ENCODE measurements at regions of chr5 and their contacts with region 1.

Region 1: DNA sequence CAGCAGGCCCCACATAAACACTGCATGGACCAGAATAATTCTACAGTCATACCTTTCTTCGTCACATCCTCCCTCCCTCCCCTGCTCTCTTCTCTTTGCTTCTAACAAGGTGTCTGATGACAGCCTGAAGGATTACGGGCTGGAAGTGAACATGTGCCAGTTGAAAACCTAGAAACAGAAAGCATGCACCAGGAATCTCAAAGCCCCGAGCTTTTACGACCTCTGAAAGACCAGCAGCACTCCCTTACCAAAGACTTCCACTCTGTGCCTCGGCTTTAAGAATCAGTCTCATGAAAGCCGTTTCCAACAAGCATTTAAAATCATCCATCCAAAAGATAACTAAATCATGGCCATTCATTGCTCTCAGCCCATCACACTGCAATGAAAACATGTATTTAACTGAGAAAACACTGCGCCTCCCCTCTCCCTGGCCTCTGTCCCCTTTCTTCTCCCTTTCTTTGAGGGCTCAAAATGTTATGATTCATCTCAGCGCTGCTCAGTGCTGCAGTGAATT is 21.3 kb downstream of the MSX2 start:
- DNase-seq: no peak
- H3K4me3 ChIP-seq: no peak overlapping the region
- H3K27ac ChIP-seq: no peak overlapping the region
- H3K4me1 ChIP-seq: no peaks in the 10 kb centered on the region
- H3K27me3 ChIP-seq: peaks cover 57% of the 10 kb centered on the region
- CTCF ChIP-seq: no peak
- EP300 ChIP-seq: no peak
- POLR2A ChIP-seq: no peak

Region 2: GRCh38 chr5:174706997-174707572 is 38.6 kb before region 1 on chr5:
- in situ Hi-C with region 1: no loop called
- intact Hi-C with region 1: loop called (anchors 2 kb)
- DNase-seq: no peak
- H3K4me3 ChIP-seq: no peak overlapping the region
- H3K27ac ChIP-seq: no peak overlapping the region
- H3K4me1 ChIP-seq: no peaks in the 10 kb centered on the region
- H3K27me3 ChIP-seq: peaks cover 33% of the 10 kb centered on the region
- CTCF ChIP-seq: no peak
- EP300 ChIP-seq: no peak
- POLR2A ChIP-seq: no peak

Region 3: DNA sequence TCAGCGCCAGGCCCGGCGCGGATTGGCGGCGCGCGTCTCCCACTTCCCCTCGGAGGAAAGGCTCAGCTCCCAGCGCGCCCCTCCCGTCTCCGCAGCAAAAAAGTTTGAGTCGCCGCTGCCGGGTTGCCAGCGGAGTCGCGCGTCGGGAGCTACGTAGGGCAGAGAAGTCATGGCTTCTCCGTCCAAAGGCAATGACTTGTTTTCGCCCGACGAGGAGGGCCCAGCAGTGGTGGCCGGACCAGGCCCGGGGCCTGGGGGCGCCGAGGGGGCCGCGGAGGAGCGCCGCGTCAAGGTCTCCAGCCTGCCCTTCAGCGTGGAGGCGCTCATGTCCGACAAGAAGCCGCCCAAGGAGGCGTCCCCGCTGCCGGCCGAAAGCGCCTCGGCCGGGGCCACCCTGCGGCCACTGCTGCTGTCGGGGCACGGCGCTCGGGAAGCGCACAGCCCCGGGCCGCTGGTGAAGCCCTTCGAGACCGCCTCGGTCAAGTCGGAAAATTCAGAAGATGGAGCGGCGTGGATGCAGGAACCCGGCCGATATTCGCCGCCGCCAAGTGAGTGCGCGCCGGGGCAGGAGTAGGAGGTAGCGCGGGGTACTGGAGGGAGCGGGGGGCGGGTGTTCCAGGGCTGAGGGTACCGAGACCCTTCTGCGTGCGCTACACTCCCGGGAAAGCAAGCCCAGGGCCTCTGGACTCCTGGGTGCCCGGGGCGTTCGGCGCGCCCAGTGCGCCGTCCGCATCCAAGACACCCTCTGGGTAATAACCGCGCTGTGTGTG is 21.0 kb before region 1 on chr5 and contains the start of gene MSX2:
- in situ Hi-C with region 1: no loop called
- intact Hi-C with region 1: no loop called
- DNase-seq: peak; percentile 84
- H3K4me3 ChIP-seq: peak within 1 kb of the TSS; percentile 47 to 55 (median 52)
- H3K27ac ChIP-seq: peak within 1 kb of the TSS in 3 of 4 donors; percentile 45 to 56 (median 55)
- H3K4me1 ChIP-seq: peaks cover 0 to 27% (median 17%) of the 10 kb centered on the region in 4 donors
- H3K27me3 ChIP-seq: peaks cover 99% of the 10 kb centered on the region
- CTCF ChIP-seq: no peak
- EP300 ChIP-seq: no peak
- POLR2A ChIP-seq: peak; percentile 21
- total RNA-seq, gene MSX2: 0.27 to 1.1 TPM in 2 of 4 donors, not detected in the others

Region 4: GRCh38 chr5:174760721-174761120 is 15.1 kb after region 1 on chr5:
- in situ Hi-C with region 1: no loop called
- intact Hi-C with region 1: no loop called
- DNase-seq: no peak
- H3K4me3 ChIP-seq: no peak overlapping the region
- H3K27ac ChIP-seq: no peak overlapping the region
- H3K4me1 ChIP-seq: no peaks in the 10 kb centered on the region
- H3K27me3 ChIP-seq: no peaks in the 10 kb centered on the region
- CTCF ChIP-seq: no peak
- EP300 ChIP-seq: no peak
- POLR2A ChIP-seq: no peak

Region 5: DNA sequence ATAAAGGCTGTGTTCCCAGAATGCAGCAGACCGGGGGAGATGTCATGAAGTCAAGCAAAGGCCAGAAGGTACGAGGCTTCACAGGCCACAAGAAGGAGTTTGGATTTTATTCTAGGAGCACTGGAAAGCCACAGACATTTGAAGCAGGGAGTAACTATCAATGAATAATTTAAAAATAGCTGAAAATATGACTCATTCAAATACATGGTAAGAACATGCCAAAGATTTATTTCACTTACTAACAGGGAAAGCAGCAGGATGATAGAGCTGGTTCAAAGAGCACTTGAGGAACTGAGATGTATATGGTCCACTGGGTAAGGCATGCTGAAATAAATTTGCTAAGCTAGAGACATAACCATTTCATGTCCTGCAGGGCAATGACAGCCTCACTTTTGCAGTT is 31.9 kb after region 1 on chr5:
- in situ Hi-C with region 1: no loop called
- intact Hi-C with region 1: no loop called
- DNase-seq: no peak
- H3K4me3 ChIP-seq: no peak overlapping the region
- H3K27ac ChIP-seq: no peak overlapping the region
- H3K4me1 ChIP-seq: no peaks in the 10 kb centered on the region
- H3K27me3 ChIP-seq: no peaks in the 10 kb centered on the region
- CTCF ChIP-seq: no peak
- EP300 ChIP-seq: no peak
- POLR2A ChIP-seq: no peak

Region 6: GRCh38 chr5:175363300-175363699 is 617.7 kb after region 1 on chr5:
- in situ Hi-C with region 1: no loop called
- intact Hi-C with region 1: no loop called
- DNase-seq: no peak
- H3K4me3 ChIP-seq: no peak overlapping the region
- H3K27ac ChIP-seq: no peak overlapping the region
- H3K4me1 ChIP-seq: no peaks in the 10 kb centered on the region
- H3K27me3 ChIP-seq: no peaks in the 10 kb centered on the region
- CTCF ChIP-seq: no peak
- EP300 ChIP-seq: no peak
- POLR2A ChIP-seq: no peak